ENCODE measurements at regions of chr6 and their contacts with region 1.

Region 1: DNA sequence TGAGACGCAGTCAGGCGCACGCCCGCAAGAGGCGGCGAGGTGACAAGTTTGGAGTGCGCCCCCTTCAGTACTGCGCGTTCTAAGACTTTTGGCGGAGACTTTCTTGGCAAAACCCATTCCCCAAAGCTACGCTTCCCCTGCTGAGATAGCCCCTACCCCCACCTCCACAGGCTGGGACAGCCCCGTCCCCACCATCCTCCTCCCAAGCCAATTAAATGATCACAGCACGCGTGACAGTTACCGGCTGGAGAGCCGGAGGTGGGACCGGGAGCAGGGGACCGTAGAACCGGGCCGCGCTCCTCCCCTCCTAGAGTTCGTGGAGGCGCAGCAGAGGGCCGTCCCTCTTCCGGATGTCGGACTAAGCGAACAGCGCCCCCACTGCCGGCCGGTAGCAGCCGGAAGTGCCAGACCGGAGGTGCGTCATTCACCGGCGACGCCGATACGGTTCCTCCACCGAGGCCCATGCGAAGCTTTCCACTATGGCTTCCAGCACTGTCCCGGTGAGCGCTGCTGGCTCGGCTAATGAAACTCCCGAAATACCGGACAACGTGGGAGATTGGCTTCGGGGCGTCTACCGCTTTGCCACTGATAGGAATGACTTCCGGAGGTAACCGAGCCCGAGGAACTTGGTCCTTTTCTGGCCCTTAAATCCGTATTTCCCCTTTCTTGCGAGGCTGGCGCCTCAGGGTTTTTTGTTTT is at the start of gene TOMM6:
- DNase-seq: peak; percentile 92
- ATAC-seq: peak; percentile 89
- H3K4me3 ChIP-seq: peak within 1 kb of the TSS; percentile 65 to 99 (median 99)
- H3K27ac ChIP-seq: peak within 1 kb of the TSS; percentile 94
- H3K4me1 ChIP-seq: peaks cover 27% of the 10 kb centered on the region
- H3K27me3 ChIP-seq: no peaks in the 10 kb centered on the region; a peak in 2 of 5 replicates
- CTCF ChIP-seq: peak; percentile 92
- EP300 ChIP-seq: no peak; a peak in 1 of 4 replicates
- POLR2A ChIP-seq: peak in 1 of 2 experiments; percentile 98; a peak in 2 of 4 replicates
- RAD21 ChIP-seq: 0 out of 2 replicates have a peak, but pooled peaks have one; percentile 29
- total RNA-seq, gene TOMM6: 321 and 480 TPM in 2 replicates

Region 2: GRCh38 chr6:41705996-41706835 is 81.2 kb before region 1 on chr6:
- CTCF ChIA-PET with region 1: interaction called, 29 read pairs
- POLR2A ChIA-PET with region 1: no interaction called
- in situ Hi-C with region 1: no loop called
- intact Hi-C with region 1: no loop called
- DNase-seq: peak; percentile 67
- ATAC-seq: peak; percentile 93
- H3K4me3 ChIP-seq: no peak overlapping the region
- H3K27ac ChIP-seq: no peak overlapping the region
- H3K4me1 ChIP-seq: peaks cover 18% of the 10 kb centered on the region
- H3K27me3 ChIP-seq: no peaks in the 10 kb centered on the region
- CTCF ChIP-seq: peak; percentile 99
- EP300 ChIP-seq: no peak
- POLR2A ChIP-seq: no peak
- RAD21 ChIP-seq: peak; percentile 92

Region 3: DNA sequence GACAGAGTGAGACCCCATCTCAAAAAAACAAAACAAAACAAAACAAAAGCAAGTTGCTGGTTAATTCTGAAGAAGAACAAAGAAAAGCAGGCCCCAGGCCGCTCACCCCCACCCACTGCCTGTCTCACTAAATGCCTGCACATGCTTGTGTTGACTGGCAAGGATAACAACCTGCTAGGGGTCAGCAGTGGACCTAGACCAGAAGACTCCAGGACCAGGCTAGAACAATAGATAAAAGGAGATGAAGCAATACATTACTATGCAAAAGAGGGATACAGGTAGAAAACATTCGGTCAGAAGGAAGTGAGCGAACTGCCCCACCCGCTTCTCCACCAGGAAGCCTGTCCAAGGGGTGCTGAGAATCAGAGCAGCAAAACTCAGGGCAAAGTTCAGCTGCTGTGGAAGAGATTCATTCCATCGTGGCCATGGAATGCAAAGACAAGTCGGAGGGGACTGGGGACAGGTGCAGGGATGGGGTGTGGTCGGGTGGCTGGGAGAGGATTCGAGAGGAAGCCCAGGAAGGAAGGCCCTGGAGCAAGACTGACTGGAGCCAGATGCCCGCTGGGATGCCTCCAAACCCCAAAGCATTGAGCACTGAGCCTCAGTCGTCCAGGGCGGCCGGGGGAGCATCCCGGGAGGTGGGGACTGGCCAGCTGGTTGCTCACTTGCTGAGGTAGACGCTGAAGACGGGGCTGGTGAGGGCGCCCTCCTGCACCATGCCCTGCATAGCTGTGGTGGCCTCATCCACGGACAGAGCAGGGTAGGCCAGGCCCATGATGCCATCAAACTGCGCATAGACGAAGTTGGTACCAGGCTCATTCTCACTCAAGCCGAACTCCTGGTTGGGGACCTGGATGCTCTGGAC is 45.5 kb before region 1 on chr6:
- CTCF ChIA-PET with region 1: no interaction called
- POLR2A ChIA-PET with region 1: interaction called, 60 read pairs
- in situ Hi-C with region 1: no loop called
- intact Hi-C with region 1: no loop called
- DNase-seq: peak; percentile 97
- ATAC-seq: peak; percentile 62
- H3K4me3 ChIP-seq: peak overlapping the region in 1 of 3 experiments; percentile 31; a peak in 1 of 6 replicates
- H3K27ac ChIP-seq: peak overlapping the region; percentile 69
- H3K4me1 ChIP-seq: peaks cover 97% of the 10 kb centered on the region
- H3K27me3 ChIP-seq: no peaks in the 10 kb centered on the region
- CTCF ChIP-seq: peak; percentile 56
- EP300 ChIP-seq: peak; percentile 64; a peak in 3 of 4 replicates
- POLR2A ChIP-seq: no peak
- RAD21 ChIP-seq: no peak; the same call in 1 of the 2 replicates

Region 4: DNA sequence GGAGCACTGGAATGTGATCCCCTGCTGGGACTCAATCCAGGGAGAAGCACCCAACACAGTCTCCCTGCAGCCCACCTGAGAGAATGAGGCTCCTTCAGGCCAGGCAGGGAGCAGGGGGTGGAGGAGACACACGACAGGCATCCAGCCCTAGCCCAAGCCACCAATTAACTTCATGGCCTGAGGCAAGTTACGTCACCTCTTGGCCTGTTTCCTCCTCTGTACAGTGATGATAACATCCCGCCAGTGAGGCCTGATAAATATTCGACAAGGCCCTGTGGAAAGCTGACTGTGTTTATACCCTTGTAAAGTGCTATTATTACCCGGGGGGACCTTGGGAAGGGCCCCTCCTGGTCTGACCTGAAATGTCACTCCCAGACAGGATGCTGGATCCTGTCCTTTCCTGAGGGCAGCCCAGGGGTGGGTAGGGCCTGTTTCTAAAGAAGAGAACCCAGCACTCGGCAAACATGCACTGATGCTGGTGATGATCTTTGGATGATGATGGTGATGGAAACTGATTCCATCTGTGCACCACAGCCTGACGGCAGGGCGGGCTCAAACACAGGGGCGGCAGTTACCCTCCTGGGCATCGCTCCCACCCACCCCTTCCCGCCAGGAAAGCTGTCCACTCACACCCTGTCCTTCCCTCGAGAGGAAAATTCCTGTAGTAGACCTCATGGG is 20.1 kb before region 1 on chr6:
- CTCF ChIA-PET with region 1: no interaction called
- POLR2A ChIA-PET with region 1: interaction called, 19 read pairs
- in situ Hi-C with region 1: no loop called
- intact Hi-C with region 1: no loop called
- DNase-seq: peak; percentile 82
- ATAC-seq: peak; percentile 47
- H3K4me3 ChIP-seq: no peak overlapping the region
- H3K27ac ChIP-seq: no peak overlapping the region
- H3K4me1 ChIP-seq: peaks cover 45% of the 10 kb centered on the region
- H3K27me3 ChIP-seq: no peaks in the 10 kb centered on the region
- CTCF ChIP-seq: no peak
- EP300 ChIP-seq: no peak
- POLR2A ChIP-seq: no peak
- RAD21 ChIP-seq: no peak

Region 5: GRCh38 chr6:41920921-41921711 is 133.7 kb after region 1 on chr6 and contains the starts of genes BYSL and MED20:
- CTCF ChIA-PET with region 1: interaction called, 22 read pairs
- POLR2A ChIA-PET with region 1: interaction called, 47 read pairs
- in situ Hi-C with region 1: loop called (anchors 5 kb)
- intact Hi-C with region 1: loop called (anchors 2 kb)
- DNase-seq: peak; percentile 92
- ATAC-seq: peak; percentile 91
- H3K4me3 ChIP-seq: peak within 1 kb of the TSS; percentile 80 to 93 (median 86)
- H3K27ac ChIP-seq: peak within 1 kb of the TSS; percentile 96
- H3K4me1 ChIP-seq: peaks cover 41% of the 10 kb centered on the region
- H3K27me3 ChIP-seq: no peaks in the 10 kb centered on the region; a peak in 1 of 5 replicates
- CTCF ChIP-seq: peak; percentile 96
- EP300 ChIP-seq: no peak; a peak in 1 of 4 replicates
- POLR2A ChIP-seq: peak; percentile 77 to 89
- RAD21 ChIP-seq: no peak; the same call in 1 of the 2 replicates
- total RNA-seq, gene BYSL: 27.9 and 37.3 TPM in 2 replicates
- total RNA-seq, gene MED20: 41.1 and 56.3 TPM in 2 replicates

Region 6: DNA sequence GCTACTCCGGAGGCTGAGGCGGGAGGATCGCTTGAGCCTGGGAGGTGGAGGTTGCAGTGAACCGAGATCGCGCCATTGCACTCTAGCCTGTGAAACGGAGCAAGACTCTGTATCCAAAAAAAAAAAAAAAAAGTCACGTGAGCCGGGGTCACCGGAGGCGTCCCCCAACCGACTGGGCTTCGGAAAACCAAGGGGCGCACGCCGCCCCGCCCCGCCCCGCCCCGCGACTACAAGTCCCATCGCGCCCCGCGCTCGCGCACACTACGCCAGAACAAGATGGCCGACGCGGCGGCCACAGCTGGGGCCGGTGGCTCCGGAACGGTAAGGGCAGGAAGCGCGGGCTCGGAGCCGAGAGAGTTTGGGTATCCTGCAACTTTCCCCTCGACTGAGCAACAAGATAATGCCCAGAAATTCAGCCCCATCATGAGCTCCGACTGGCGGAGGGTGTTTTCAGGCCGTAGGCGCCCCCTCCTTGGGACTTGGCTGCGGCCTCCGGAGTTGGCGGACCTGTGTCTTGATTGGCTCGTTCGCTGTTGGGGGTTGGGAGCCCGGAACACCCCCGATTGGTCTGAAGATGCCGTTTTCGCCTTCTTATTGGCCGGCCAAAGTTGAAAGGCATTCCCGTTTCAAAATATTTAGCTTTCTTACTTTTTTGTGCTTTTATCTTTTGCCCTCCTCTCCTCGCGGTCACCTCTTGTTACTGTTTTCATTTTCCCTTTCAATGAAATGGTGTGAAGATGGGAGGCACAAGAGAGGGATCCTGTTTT is 263.1 kb after region 1 on chr6 and contains the start of gene TAF8:
- CTCF ChIA-PET with region 1: interaction called, 17 read pairs
- POLR2A ChIA-PET with region 1: interaction called, 46 read pairs
- in situ Hi-C with region 1: loop called (anchors 5 kb)
- intact Hi-C with region 1: no loop called
- DNase-seq: peak; percentile 94
- ATAC-seq: peak; percentile 90
- H3K4me3 ChIP-seq: peak within 1 kb of the TSS; percentile 68 to 100 (median 99)
- H3K27ac ChIP-seq: peak within 1 kb of the TSS; percentile 96
- H3K4me1 ChIP-seq: peaks cover 53% of the 10 kb centered on the region
- H3K27me3 ChIP-seq: no peaks in the 10 kb centered on the region; a peak in 2 of 5 replicates
- CTCF ChIP-seq: peak; percentile 29; the same call in 1 of the 2 replicates
- EP300 ChIP-seq: peak; percentile 20 to 82; a peak in 1 of 4 replicates
- POLR2A ChIP-seq: peak; percentile 91 to 100
- RAD21 ChIP-seq: peak; percentile 57
- total RNA-seq, gene TAF8: 20.2 and 25.2 TPM in 2 replicates

Region 7: GRCh38 chr6:42217519-42218367 is 430.4 kb after region 1 on chr6 and contains the start of gene MRPS10:
- CTCF ChIA-PET with region 1: no interaction called
- POLR2A ChIA-PET with region 1: interaction called, 3 read pairs
- in situ Hi-C with region 1: loop called (anchors 25 kb)
- intact Hi-C with region 1: no loop called
- DNase-seq: peak; percentile 97
- ATAC-seq: peak; percentile 98
- H3K4me3 ChIP-seq: peak within 1 kb of the TSS; percentile 69 to 100 (median 84)
- H3K27ac ChIP-seq: peak within 1 kb of the TSS; percentile 83
- H3K4me1 ChIP-seq: peaks cover 49% of the 10 kb centered on the region
- H3K27me3 ChIP-seq: no peaks in the 10 kb centered on the region; a peak in 1 of 5 replicates
- CTCF ChIP-seq: peak; percentile 37; the same call in 1 of the 2 replicates
- EP300 ChIP-seq: peak in 1 of 2 experiments; percentile 33; a peak in 1 of 4 replicates
- POLR2A ChIP-seq: peak; percentile 89 to 96
- RAD21 ChIP-seq: 0 out of 2 replicates have a peak, but pooled peaks have one; percentile 18
- total RNA-seq, gene MRPS10: 54.6 and 79.2 TPM in 2 replicates